ENCODE measurements at regions of chr17 and their contacts with region 1.

Region 1: DNA sequence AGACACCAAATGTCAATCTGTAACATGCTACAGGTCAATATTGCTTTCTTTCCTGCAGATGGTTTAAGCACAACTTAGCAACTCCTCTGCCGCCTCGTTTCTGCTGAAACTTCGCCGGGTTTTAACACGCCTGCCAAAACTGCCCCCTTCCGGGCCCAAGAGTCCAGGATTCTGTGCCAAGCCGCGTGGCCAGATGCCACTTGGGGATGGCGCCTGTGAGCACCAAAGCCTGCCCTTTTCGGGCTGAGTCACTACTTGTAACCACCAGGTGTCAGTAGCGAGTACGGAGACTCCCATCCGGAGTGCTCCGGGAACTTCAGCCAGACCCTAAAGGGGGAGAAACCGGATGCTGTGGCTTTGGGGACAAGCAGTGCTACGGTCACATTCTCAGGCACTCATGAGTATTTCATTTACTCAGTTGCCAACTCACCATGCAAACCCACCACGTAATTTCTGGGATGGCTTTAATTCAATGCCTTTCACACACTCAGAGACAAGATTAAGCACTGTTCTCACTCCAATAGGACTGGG is 7.8 kb downstream of the PMP22 start:
- DNase-seq: peak; percentile 69 to 88 (median 78)
- H3K4me3 ChIP-seq: peak overlapping the region in 1 of 3 donors; percentile 11
- H3K27ac ChIP-seq: no peak overlapping the region
- H3K4me1 ChIP-seq: peaks cover 0 to 14% (median 8%) of the 10 kb centered on the region in 3 donors
- H3K27me3 ChIP-seq: no peaks in the 10 kb centered on the region
- CTCF ChIP-seq: peak; percentile 72

Region 2: DNA sequence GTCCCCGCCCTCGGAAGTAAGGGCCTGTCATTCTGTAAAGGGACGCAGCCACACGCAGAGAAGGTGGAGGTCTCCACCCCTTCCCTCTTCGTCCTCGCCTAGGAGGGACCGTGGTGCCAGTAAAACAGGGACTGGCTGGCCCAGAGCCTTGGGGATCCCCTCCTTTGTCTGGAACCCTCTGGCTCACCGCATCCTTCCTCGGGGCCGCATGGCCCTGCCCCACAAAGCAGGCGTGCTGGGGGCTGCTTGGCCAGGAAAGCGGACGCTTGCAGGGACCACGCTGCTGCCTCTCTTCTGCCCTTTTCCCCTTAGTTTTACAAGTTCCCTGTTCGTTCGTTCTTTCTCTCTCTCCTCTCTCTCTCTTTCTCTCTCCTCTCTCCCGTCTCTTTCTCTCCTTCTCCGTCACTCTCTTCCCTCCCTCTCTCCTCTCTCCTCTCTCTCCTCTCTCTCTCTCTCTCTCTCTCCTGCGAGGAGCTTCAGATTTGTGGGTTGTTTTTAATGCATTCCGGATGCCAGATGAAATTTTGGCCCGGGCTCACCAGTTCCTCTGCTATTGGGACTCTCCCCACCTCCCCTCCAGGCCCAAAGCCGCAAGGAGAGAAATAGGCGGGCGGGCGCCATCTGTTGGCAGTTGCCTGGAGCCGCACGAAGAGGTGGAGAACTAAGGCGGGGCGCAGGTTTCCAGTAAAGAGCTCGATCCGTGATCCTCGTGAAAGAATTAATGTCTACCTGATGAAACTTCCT is 245.2 kb after region 1 on chr17:
- intact Hi-C with region 1: loop called (anchors 5 kb)
- DNase-seq: peak; percentile 89 to 96 (median 93)
- H3K4me3 ChIP-seq: peak overlapping the region in 1 of 3 donors; percentile 43
- H3K27ac ChIP-seq: peak overlapping the region; percentile 62 to 71
- H3K4me1 ChIP-seq: peaks cover 4 to 13% (median 9%) of the 10 kb centered on the region in 3 donors
- H3K27me3 ChIP-seq: no peaks in the 10 kb centered on the region
- CTCF ChIP-seq: peak; percentile 85

Measured in kidney (tissue), 22 donors.